ENCODE measurements at regions of chr19 and their contacts with region 1.

Region 1: DNA sequence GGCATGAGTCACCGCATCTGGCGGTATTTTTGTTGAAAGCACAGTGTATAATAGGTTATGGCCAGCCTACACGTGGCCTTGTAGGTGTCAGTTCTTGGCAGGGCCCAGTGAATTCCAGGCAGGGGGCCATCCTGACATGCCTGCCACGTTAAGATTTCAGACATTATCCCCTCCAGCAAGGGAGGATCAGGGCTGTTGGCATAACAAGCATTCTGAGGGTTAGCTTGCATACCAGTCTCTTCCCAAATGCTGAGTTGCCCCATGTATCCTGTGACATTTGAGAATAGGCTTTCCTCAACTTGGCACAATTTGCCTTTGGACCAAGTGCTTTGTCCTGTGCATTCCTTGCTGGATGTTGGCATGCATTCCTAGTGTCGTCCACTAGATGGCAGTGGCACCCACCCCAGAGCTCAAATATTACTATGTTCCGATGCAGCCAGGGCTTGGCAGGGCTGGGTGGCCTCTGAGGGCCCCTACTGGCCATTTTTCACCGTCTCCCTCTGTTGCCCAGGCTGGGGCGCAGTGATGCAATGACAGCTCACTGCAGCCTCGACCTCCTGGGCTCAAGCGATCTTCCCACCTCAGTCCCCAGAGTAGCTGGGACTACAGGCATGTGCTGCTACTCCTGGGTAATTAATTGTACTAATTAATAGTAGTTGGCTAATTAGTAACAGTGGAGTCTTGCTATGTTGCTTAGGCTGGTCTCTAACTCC is 31.2 kb downstream of the NLRP12 start:
- DNase-seq: peak; percentile 86
- ATAC-seq: peak; percentile 100
- H3K4me3 Mint-ChIP-seq: no peak overlapping the region
- H3K27ac Mint-ChIP-seq: no peak overlapping the region
- H3K4me1 Mint-ChIP-seq: no peaks in the 10 kb centered on the region
- H3K27me3 Mint-ChIP-seq: no peaks in the 10 kb centered on the region

Region 2: DNA sequence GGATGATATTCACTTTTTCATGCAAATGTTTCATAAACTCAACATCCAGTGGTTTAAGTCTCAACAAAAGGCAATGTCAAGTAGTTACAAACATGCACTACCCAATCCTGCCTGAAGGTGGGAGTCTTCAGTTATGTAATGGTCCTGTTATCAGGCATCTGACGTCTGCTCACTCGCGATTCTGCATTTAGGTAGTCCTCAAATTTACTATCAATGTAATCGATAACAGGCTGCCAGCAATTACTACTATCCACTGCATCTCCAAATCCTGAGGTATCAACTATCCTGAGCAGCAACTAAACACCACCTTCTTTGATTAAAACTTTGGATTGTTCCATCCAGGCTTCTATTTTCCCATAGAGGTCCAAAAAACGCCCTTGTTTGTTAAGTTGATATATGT is 19.9 kb before region 1 on chr19:
- CTCF ChIA-PET with region 1: interaction called, 14 read pairs
- POLR2A ChIA-PET with region 1: no interaction called
- DNase-seq: peak; percentile 70
- ATAC-seq: no peak
- H3K4me3 Mint-ChIP-seq: no peak overlapping the region
- H3K27ac Mint-ChIP-seq: no peak overlapping the region
- H3K4me1 Mint-ChIP-seq: no peaks in the 10 kb centered on the region
- H3K27me3 Mint-ChIP-seq: no peaks in the 10 kb centered on the region

Region 3: DNA sequence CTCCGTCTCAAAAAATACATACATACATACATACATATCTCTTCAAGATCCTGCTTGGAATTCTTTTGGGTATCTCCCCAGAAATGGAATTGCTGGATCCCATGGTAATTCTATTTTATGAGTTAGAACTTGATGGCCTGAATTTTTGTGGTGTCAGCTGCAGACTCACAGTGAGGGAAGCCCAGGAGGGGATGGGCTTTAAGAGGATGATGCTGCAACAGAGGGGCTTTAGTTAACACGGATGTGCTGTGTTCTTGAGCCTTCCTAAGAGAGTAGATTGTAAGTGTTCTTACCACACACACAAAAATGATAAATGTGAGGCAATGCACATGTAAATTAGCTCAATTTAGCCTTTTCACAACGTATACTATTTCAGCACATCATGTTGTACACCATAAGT is 230.3 kb after region 1 on chr19:
- CTCF ChIA-PET with region 1: interaction called, 29 read pairs
- POLR2A ChIA-PET with region 1: no interaction called
- DNase-seq: no peak
- ATAC-seq: no peak
- H3K4me3 Mint-ChIP-seq: no peak overlapping the region
- H3K27ac Mint-ChIP-seq: no peak overlapping the region
- H3K4me1 Mint-ChIP-seq: peaks cover 13% of the 10 kb centered on the region
- H3K27me3 Mint-ChIP-seq: peaks cover 10% of the 10 kb centered on the region

Region 4: DNA sequence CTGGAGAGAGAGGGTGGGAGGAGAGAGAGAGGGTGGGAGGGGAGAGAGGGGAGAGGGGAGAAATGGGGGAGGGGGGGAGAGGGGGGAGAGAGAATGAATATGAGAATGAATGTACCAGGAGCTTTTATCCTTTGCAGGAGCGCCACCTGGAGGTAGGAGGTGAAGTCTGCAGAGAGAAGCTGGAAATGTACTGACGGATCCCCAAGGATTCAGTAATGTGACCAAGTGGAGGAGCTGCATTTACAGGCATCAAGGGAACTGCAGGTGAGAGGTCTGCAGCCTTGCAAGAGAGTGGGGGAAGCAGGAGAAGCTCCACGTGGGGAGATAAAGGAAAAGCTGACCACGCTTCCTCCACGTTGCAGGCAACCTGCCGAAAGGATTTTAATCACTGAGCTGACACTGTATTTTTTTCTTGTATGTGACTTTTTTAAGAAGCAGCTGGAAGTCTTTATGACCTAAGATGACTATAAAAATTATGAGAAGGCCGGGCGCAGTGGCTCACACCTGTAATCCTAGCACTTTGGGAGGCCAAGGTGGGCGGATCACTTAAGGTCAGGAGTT is 237.1 kb after region 1 on chr19:
- CTCF ChIA-PET with region 1: interaction called, 29 read pairs
- POLR2A ChIA-PET with region 1: no interaction called
- DNase-seq: peak; percentile 68
- ATAC-seq: peak; percentile 39
- H3K4me3 Mint-ChIP-seq: no peak overlapping the region
- H3K27ac Mint-ChIP-seq: no peak overlapping the region
- H3K4me1 Mint-ChIP-seq: no peaks in the 10 kb centered on the region
- H3K27me3 Mint-ChIP-seq: peaks cover 12% of the 10 kb centered on the region